Dendritic cell treated with granulocyte-macrophage colony-stimulating factor and Interleukin-4, amounts not matched to agents 40 ng/mL and 50 ng/mL, for 4 days (primary cell): ENCODE measurements at regions of chr15 and their contacts with region 1.

Region 1: GRCh38 chr15:89874926-89875564 is 18.7 kb downstream of the AP3S2 start:
- H3K4me3 Mint-ChIP-seq: no peak overlapping the region
- H3K27ac Mint-ChIP-seq: peak overlapping the region; percentile 86
- H3K4me1 Mint-ChIP-seq: peaks cover 32% of the 10 kb centered on the region
- H3K27me3 Mint-ChIP-seq: no peaks in the 10 kb centered on the region

Region 2: DNA sequence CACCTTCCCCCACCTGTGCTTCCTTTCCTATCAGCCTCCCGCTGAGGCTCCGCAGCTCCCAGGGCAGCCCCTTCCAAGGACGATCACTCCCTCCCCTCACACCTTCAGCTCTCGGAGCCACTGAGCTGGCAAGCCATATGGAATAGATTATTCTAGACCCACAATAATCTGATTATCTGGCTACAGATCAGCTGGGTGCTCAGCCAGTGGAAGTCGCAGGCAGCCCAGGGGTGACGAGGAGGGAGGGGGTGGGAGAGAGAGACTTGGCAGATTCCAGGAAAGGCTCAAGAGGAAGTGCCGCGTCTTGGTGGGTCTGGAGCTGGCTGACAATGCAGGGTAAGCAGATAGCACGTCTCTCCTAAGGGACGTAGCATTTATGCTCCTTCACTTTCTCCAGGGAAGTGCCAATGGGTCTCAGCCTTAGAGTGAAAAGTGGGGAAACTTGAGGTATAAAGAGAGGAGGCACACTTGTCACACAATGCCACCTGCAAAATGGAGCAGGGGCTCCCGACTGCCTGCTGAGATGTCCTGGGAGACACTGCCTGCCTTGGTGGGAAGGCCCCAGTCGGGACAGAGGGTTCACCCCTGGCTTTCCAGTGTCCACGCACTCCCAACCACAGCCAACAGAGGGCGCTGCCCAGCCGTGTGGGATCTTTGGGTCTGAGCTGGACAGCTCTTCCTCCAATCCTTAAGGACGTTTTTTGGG is 114.6 kb before region 1 on chr15:
- intact Hi-C with region 1: loop called (anchors 1 kb)
- H3K4me3 Mint-ChIP-seq: peak overlapping the region; percentile 48
- H3K27ac Mint-ChIP-seq: peak overlapping the region; percentile 87
- H3K4me1 Mint-ChIP-seq: peaks cover 31% of the 10 kb centered on the region
- H3K27me3 Mint-ChIP-seq: peaks cover 8% of the 10 kb centered on the region

Region 3: DNA sequence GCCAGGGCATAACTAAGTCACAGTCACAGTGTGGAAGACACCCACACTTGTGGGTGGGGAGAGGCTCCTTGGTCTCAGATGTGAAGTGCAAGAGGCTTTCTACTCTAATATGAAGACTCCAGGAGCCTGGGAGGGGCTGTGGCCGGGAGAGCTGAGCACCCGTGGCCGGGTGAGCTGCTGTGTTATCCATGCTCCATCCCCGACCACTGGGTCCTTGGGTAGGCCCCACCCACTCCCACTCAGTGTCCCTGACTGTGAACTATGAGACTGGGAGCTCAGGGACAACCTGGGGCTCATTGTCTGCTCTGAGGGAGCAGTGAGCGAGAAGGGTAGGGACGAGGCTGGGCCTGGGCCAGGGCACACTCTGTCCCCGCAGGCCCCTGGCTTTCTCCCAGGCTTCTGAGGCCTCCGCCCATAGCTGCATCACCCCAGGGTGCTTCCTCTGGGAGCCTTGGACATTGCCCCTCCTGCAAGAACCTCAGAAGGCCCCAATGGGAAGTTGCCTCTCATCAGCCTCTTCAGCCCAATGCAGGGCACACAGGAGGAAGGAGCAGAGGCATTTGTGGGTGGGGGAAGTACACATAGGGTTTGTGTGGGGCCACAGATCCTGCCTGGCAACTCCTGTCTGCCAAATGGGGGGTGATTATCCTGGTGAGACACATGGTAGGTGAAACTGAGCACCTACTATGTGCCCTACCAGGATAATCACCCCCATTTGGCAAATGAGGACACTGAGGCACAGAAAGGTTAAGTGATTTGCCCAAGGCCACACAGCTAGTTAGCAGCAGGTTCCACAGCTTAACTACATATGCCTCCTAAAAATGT is 62.8 kb before region 1 on chr15:
- intact Hi-C with region 1: loop called (anchors 5 kb)
- H3K4me3 Mint-ChIP-seq: peak overlapping the region; percentile 90
- H3K27ac Mint-ChIP-seq: peak overlapping the region; percentile 93
- H3K4me1 Mint-ChIP-seq: peaks cover 78% of the 10 kb centered on the region
- H3K27me3 Mint-ChIP-seq: no peaks in the 10 kb centered on the region

Region 4: DNA sequence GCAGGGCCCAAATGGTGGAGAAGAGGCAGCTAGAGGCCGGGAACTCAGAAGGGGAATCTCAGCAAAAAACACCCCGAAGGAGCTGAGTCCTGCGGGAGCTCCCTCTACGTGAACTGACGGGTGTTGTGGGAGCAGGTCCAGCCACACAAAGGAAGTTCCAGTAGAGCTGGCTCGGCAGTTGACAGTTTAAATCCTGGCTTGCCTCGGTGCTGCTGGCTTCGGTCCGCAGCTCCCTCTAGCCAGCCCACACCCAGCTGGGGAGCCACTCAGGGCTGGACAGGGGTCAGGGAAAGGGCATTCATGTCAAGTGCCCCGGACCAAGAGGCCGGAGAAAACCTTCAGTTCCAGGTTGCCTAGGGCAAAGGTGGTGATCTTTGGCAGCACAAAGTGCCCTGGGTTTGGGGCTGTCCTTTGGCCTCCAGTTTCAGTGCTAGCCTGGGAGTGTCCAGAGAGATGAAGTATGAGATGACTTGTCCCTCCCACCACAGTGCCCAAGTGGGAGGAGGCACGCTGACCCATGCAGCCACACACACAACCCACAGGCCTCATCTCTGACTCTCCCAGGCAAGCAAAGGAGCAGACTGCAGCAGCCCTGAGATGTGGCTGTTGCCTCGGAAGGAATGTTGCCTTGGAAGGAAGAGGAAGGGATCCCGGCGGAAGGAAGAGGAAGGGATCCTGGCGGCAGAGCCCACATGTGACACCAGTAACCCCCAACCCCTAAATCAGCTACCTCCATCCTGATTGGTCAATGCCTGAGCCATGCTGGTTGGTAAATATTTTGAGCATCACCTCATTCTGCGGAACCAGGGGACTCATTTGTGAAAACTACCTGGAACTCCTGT is 46.6 kb before region 1 on chr15:
- intact Hi-C with region 1: loop called (anchors 2 kb)
- H3K4me3 Mint-ChIP-seq: peak overlapping the region; percentile 24
- H3K27ac Mint-ChIP-seq: peak overlapping the region; percentile 18
- H3K4me1 Mint-ChIP-seq: peaks cover 91% of the 10 kb centered on the region
- H3K27me3 Mint-ChIP-seq: no peaks in the 10 kb centered on the region

Region 5: GRCh38 chr15:90046911-90047392 is 171.9 kb after region 1 on chr15:
- intact Hi-C with region 1: no loop called
- H3K4me3 Mint-ChIP-seq: no peak overlapping the region
- H3K27ac Mint-ChIP-seq: peak overlapping the region; percentile 72
- H3K4me1 Mint-ChIP-seq: peaks cover 72% of the 10 kb centered on the region
- H3K27me3 Mint-ChIP-seq: no peaks in the 10 kb centered on the region